WTC11 (cell line): ENCODE measurements at regions of chr15 and their contacts with region 1.

Region 1: GRCh38 chr15:51776952-51777574 is 25.7 kb downstream of the TMOD2 start:
- DNase-seq: peak; percentile 67
- ATAC-seq: peak; percentile 79
- H3K4me3 Mint-ChIP-seq: no peak overlapping the region
- H3K27ac Mint-ChIP-seq: no peak overlapping the region
- H3K4me1 Mint-ChIP-seq: peaks cover 5% of the 10 kb centered on the region
- H3K27me3 Mint-ChIP-seq: no peaks in the 10 kb centered on the region
- CTCF ChIP-seq: peak; percentile 49

Region 2: GRCh38 chr15:51613951-51614350 is 163.1 kb before region 1 on chr15:
- CTCF ChIA-PET with region 1: no interaction called
- POLR2A ChIA-PET with region 1: no interaction called
- DNase-seq: no peak
- ATAC-seq: no peak
- H3K4me3 Mint-ChIP-seq: no peak overlapping the region
- H3K27ac Mint-ChIP-seq: no peak overlapping the region
- H3K4me1 Mint-ChIP-seq: no peaks in the 10 kb centered on the region
- H3K27me3 Mint-ChIP-seq: peaks cover 2% of the 10 kb centered on the region; the same call in 1 of the 2 replicates
- CTCF ChIP-seq: no peak

Region 3: GRCh38 chr15:51649659-51650521 is 127.2 kb before region 1 on chr15:
- CTCF ChIA-PET with region 1: interaction called, 181 read pairs
- POLR2A ChIA-PET with region 1: interaction called, 5 read pairs
- DNase-seq: no peak
- ATAC-seq: peak; percentile 83
- H3K4me3 Mint-ChIP-seq: no peak overlapping the region
- H3K27ac Mint-ChIP-seq: no peak overlapping the region
- H3K4me1 Mint-ChIP-seq: peaks cover 6% of the 10 kb centered on the region
- H3K27me3 Mint-ChIP-seq: no peaks in the 10 kb centered on the region
- CTCF ChIP-seq: peak; percentile 50

Region 4: GRCh38 chr15:51688863-51689262 is 88.2 kb before region 1 on chr15:
- CTCF ChIA-PET with region 1: interaction called, 11 read pairs
- POLR2A ChIA-PET with region 1: no interaction called
- DNase-seq: no peak
- ATAC-seq: peak; percentile 71
- H3K4me3 Mint-ChIP-seq: no peak overlapping the region
- H3K27ac Mint-ChIP-seq: no peak overlapping the region
- H3K4me1 Mint-ChIP-seq: peaks cover 2% of the 10 kb centered on the region; the same call in 1 of the 2 replicates
- H3K27me3 Mint-ChIP-seq: no peaks in the 10 kb centered on the region
- CTCF ChIP-seq: no peak

Region 5: GRCh38 chr15:51721199-51721960 is 55.7 kb before region 1 on chr15:
- CTCF ChIA-PET with region 1: no interaction called
- POLR2A ChIA-PET with region 1: no interaction called
- DNase-seq: no peak
- ATAC-seq: no peak
- H3K4me3 Mint-ChIP-seq: no peak overlapping the region
- H3K27ac Mint-ChIP-seq: no peak overlapping the region
- H3K4me1 Mint-ChIP-seq: peaks cover 25% of the 10 kb centered on the region
- H3K27me3 Mint-ChIP-seq: no peaks in the 10 kb centered on the region
- CTCF ChIP-seq: no peak

Region 6: GRCh38 chr15:51758645-51759044 is 18.4 kb before region 1 on chr15:
- CTCF ChIA-PET with region 1: interaction called, 48 read pairs
- POLR2A ChIA-PET with region 1: no interaction called
- DNase-seq: no peak
- ATAC-seq: no peak
- H3K4me3 Mint-ChIP-seq: no peak overlapping the region
- H3K27ac Mint-ChIP-seq: no peak overlapping the region
- H3K4me1 Mint-ChIP-seq: 0 out of 2 replicates have a peak, but pooled peaks cover 4% of the 10 kb centered on the region
- H3K27me3 Mint-ChIP-seq: peaks cover 19% of the 10 kb centered on the region
- CTCF ChIP-seq: no peak

Region 7: GRCh38 chr15:51935466-51936104 is 158.5 kb after region 1 on chr15:
- CTCF ChIA-PET with region 1: interaction called, 10 read pairs
- POLR2A ChIA-PET with region 1: no interaction called
- DNase-seq: no peak
- ATAC-seq: no peak
- H3K4me3 Mint-ChIP-seq: peak overlapping the region; percentile 40
- H3K27ac Mint-ChIP-seq: no peak overlapping the region
- H3K4me1 Mint-ChIP-seq: peaks cover 4% of the 10 kb centered on the region
- H3K27me3 Mint-ChIP-seq: no peaks in the 10 kb centered on the region
- CTCF ChIP-seq: no peak